ENCODE measurements at regions of chr16 and their contacts with region 1.

Region 1: DNA sequence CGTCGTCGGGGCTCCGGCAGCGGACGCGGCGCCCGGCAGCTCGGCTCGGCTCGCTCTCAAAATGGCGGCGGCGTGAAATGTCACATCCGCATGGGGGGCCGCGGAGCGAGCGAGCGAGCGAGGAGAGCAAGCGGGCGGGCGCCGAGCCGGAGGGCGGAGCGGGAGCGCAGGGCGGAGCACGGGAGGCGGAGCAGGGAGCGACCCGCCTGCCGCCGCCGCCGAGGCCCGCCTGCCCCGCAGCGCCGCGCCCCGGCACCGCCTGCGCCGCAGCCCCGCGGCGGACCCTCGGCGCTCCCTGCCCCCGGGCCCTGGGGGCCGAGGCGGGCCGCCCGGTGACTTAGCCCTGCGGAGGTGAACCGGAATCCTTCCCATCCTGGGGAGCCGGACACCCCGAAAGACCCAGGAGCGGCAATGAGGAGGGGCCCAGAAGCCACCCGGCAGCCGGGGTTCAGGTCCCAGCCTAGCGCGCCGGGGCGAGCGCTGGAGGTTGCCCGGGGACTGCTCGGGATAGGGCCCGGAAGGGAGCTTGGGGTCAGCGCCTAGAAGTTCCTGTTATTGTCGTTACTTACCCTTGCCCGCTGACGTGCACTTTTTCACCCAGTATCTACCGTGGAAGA is at the start of gene USP7:
- DNase-seq: peak; percentile 86 to 94 (median 92)
- ATAC-seq: peak; percentile 94
- H3K4me3 ChIP-seq: peak within 1 kb of the TSS; percentile 77
- H3K4me3 Mint-ChIP-seq: peak within 1 kb of the TSS; percentile 90 to 98 (median 95)
- H3K27ac ChIP-seq: peak within 1 kb of the TSS; percentile 85
- H3K27ac Mint-ChIP-seq: peak within 1 kb of the TSS; percentile 80 to 97 (median 92)
- H3K4me1 ChIP-seq: peaks cover 30 to 34% of the 10 kb centered on the region in 2 donors
- H3K4me1 Mint-ChIP-seq: peaks cover 35 to 42% (median 40%) of the 10 kb centered on the region in 7 donors
- H3K27me3 ChIP-seq: no peaks in the 10 kb centered on the region
- H3K27me3 Mint-ChIP-seq: peaks cover 0 to 18% (median 0%) of the 10 kb centered on the region in 5 donors
- total RNA-seq, gene USP7: 175 to 261 (median 178) TPM

Region 2: DNA sequence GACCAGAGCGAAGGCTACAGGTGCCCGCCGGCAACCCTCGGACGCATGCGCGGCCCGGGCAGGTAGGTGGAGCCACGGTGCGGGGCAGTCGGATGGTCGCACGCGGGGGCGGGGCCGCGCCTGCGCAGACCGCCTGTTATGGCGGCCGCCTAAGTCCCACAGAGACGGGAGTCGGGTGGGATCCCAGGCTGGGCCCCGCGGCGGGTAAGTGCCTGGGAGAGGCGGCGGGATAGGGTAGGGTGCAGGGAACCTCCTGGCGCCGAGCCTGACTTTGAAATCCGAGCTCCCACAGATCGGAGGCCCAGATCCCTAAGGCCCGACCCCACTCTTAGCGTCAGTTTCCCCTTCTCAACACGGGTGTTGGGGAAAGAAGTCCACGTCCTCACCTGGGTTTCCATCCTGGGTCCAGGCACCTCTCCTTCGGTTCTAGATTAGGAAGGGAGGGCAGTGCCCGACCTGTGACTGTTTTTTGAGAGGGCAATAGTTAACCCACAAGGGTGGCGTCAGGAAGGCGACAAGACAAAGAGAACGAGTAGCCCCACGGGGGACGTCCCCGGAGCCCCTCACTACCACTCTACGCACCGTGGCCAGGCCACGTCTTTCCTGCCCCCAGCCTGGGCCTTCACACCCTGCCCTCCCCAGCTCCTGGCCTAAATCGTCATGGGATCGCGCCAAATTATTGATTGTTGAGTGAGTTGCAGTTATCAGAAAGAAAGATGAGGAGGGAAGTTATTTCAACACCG is 342.2 kb before region 1 on chr16 and contains the start of gene METTL22:
- CTCF ChIA-PET with region 1: no interaction called
- POLR2A ChIA-PET with region 1: no interaction called
- intact Hi-C with region 1: loop called (anchors 5 kb)
- DNase-seq: peak; percentile 83 to 98 (median 90)
- ATAC-seq: peak; percentile 99
- H3K4me3 ChIP-seq: peak within 1 kb of the TSS; percentile 97
- H3K4me3 Mint-ChIP-seq: peak within 1 kb of the TSS; percentile 93 to 100 (median 95)
- H3K27ac ChIP-seq: peak within 1 kb of the TSS; percentile 92
- H3K27ac Mint-ChIP-seq: peak within 1 kb of the TSS; percentile 75 to 93 (median 87)
- H3K4me1 ChIP-seq: peaks cover 7 to 10% of the 10 kb centered on the region in 2 donors
- H3K4me1 Mint-ChIP-seq: peaks cover 17 to 40% (median 26%) of the 10 kb centered on the region in 7 donors
- H3K27me3 ChIP-seq: no peaks in the 10 kb centered on the region
- H3K27me3 Mint-ChIP-seq: peaks cover 0 to 17% (median 6%) of the 10 kb centered on the region in 5 donors
- total RNA-seq, gene METTL22: 28.9 to 59.4 (median 48.9) TPM

Region 3: GRCh38 chr16:8797364-8798173 is 166.4 kb before region 1 on chr16 and contains the starts of genes PMM2 and TMEM186:
- CTCF ChIA-PET with region 1: no interaction called
- POLR2A ChIA-PET with region 1: no interaction called
- intact Hi-C with region 1: loop called (anchors 1 kb)
- DNase-seq: peak; percentile 78 to 96 (median 93)
- ATAC-seq: peak; percentile 99
- H3K4me3 ChIP-seq: peak within 1 kb of the TSS; percentile 90
- H3K4me3 Mint-ChIP-seq: peak within 1 kb of the TSS; percentile 91 to 99 (median 96)
- H3K27ac ChIP-seq: peak within 1 kb of the TSS; percentile 86
- H3K27ac Mint-ChIP-seq: peak within 1 kb of the TSS; percentile 87 to 95 (median 92)
- H3K4me1 ChIP-seq: peaks cover 25 to 32% of the 10 kb centered on the region in 2 donors
- H3K4me1 Mint-ChIP-seq: peaks cover 19 to 71% (median 49%) of the 10 kb centered on the region in 7 donors
- H3K27me3 ChIP-seq: no peaks in the 10 kb centered on the region
- H3K27me3 Mint-ChIP-seq: no peaks in the 10 kb centered on the region
- total RNA-seq, gene PMM2: 32.2 to 52.8 (median 41.7) TPM
- total RNA-seq, gene TMEM186: 3.2 to 16.3 (median 11.3) TPM

Region 4: DNA sequence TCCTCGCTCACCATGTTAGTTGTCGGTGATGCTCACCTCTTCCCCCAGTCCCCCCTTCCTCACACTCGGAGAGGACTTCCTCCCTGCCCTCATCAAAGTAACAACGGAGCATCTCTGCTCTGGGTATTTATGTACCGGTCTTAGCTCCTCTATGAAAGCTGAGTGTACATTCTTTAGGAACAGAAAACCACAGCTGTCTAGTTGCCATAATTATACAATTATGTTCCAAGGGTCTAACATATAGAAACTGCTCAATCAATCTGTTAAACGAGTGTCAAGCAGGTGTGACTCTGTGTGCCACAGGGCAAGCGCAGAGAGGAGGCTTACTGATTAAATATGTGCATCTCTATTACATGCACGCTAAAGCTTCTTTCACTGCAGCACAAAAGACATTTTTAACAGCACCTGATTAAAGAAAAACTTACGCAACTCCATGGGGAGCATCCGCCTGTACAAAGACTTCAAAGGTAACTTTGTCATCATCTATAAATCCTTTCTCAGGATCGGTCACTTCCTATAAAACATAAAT is 43.9 kb before region 1 on chr16:
- CTCF ChIA-PET with region 1: no interaction called
- POLR2A ChIA-PET with region 1: interaction called, 3 read pairs
- intact Hi-C with region 1: loop called in 1 of 2 experiments (anchors 10 kb)
- DNase-seq: peak in 3 of 9 donors; percentile 25 to 40 (median 33)
- ATAC-seq: peak; percentile 68
- H3K4me3 ChIP-seq: no peak overlapping the region
- H3K4me3 Mint-ChIP-seq: peak overlapping the region in 9 of 10 donors; percentile 13 to 78 (median 65)
- H3K27ac ChIP-seq: no peak overlapping the region
- H3K27ac Mint-ChIP-seq: peak overlapping the region; percentile 56 to 91 (median 86)
- H3K4me1 ChIP-seq: peaks cover 0 to 17% of the 10 kb centered on the region in 2 donors
- H3K4me1 Mint-ChIP-seq: peaks cover 13 to 73% (median 43%) of the 10 kb centered on the region in 7 donors
- H3K27me3 ChIP-seq: no peaks in the 10 kb centered on the region
- H3K27me3 Mint-ChIP-seq: no peaks in the 10 kb centered on the region

Region 5: GRCh38 chr16:9072806-9073341 is 108.9 kb after region 1 on chr16:
- CTCF ChIA-PET with region 1: no interaction called
- POLR2A ChIA-PET with region 1: no interaction called
- intact Hi-C with region 1: loop called in 1 of 2 experiments (anchors 5 kb)
- DNase-seq: no peak
- ATAC-seq: no peak
- H3K4me3 ChIP-seq: no peak overlapping the region
- H3K4me3 Mint-ChIP-seq: peak overlapping the region in 1 of 10 donors; percentile 55
- H3K27ac ChIP-seq: no peak overlapping the region
- H3K27ac Mint-ChIP-seq: peak overlapping the region in 1 of 9 donors; percentile 87
- H3K4me1 ChIP-seq: no peaks in the 10 kb centered on the region
- H3K4me1 Mint-ChIP-seq: peaks cover 4 to 28% (median 9%) of the 10 kb centered on the region in 7 donors
- H3K27me3 ChIP-seq: no peaks in the 10 kb centered on the region
- H3K27me3 Mint-ChIP-seq: peaks cover 0 to 6% (median 5%) of the 10 kb centered on the region in 5 donors

Measured in naive thymus-derived CD4-positive, alpha-beta T cell (primary cell).